T-cell (primary cell): ENCODE measurements at regions of chr4 and their contacts with region 1.

Region 1: DNA sequence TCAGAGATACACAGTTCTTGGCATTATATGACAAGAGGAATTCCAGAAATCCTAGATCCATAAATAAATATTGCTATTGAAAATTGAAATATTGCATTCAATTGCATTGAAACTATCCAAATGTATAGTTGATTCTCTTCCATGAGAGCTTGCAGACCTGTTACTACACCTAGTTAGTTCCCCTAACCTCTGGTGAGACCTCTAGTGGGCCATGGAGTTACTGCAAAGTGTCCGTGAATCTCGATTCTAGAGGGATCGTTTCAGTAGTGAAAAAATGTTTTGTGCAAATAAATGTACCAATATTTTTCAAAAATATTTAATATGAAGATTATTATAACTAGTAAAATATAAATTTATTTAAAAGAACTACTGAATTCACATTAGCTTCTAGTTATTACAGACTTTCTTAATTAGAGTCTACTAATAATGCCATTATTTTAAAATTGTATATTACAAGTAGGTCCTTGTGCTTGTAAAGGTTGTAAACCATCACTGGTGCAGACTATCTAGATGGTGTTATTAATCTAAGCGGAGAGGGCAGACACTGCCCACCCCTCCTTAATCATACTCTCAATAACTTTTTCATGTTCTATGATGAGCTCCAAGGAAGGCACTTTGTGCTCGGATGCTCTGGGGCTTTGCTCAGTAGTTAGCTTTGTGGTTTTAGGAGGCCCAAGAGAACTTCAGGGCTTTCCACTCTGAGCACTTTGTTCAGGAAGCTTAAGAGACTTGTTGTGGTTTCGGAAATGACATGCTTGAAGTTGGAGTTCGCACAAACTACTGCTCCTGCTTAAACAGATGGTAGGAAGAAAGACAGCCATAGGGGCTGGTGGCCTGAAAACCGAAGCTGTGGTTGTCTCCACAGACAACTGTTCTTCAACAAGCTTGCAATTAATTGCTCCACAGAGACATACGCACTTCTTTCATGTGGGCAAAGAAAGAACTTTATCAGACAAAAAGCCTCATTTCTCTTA is 42.8 kb downstream of the IL21 start:
- DNase-seq: peak; percentile 22 to 88 (median 67)
- ATAC-seq: peak; percentile 83 to 89 (median 84)
- H3K4me3 ChIP-seq: peak overlapping the region; percentile 18 to 23
- H3K4me3 Mint-ChIP-seq: peak overlapping the region; percentile 20 to 67 (median 62)
- H3K27ac ChIP-seq: peak overlapping the region; percentile 42
- H3K27ac Mint-ChIP-seq: peak overlapping the region; percentile 88 to 93
- H3K4me1 ChIP-seq: peaks cover 22 to 43% of the 10 kb centered on the region in 2 experiments
- H3K4me1 Mint-ChIP-seq: peaks cover 30 to 45% (median 41%) of the 10 kb centered on the region in 3 donors
- H3K27me3 ChIP-seq: peaks cover 0 to 3% of the 10 kb centered on the region in 2 experiments
- H3K27me3 Mint-ChIP-seq: no peaks in the 10 kb centered on the region

Region 2: GRCh38 chr4:122309988-122310626 is 268.0 kb before region 1 on chr4:
- CTCF ChIA-PET with region 1: interaction called, 8 to 18 read pairs
- POLR2A ChIA-PET with region 1: interaction called in 1 of 2 experiments, 3 read pairs
- DNase-seq: peak in 1 of 35 experiments; percentile 11
- ATAC-seq: no peak
- H3K4me3 ChIP-seq: no peak overlapping the region
- H3K4me3 Mint-ChIP-seq: no peak overlapping the region
- H3K27ac ChIP-seq: no peak overlapping the region
- H3K27ac Mint-ChIP-seq: no peak overlapping the region
- H3K4me1 ChIP-seq: no peaks in the 10 kb centered on the region
- H3K4me1 Mint-ChIP-seq: peaks cover 0 to 2% (median 0%) of the 10 kb centered on the region in 3 donors
- H3K27me3 ChIP-seq: no peaks in the 10 kb centered on the region
- H3K27me3 Mint-ChIP-seq: no peaks in the 10 kb centered on the region

Region 3: GRCh38 chr4:122458625-122459024 is 119.5 kb before region 1 on chr4:
- CTCF ChIA-PET with region 1: interaction called in 1 of 2 experiments, 16 read pairs
- POLR2A ChIA-PET with region 1: interaction called in 1 of 2 experiments, 3 read pairs
- DNase-seq: peak in 22 of 35 experiments; percentile 0 to 67 (median 14)
- ATAC-seq: peak; percentile 67 to 77 (median 69)
- H3K4me3 ChIP-seq: peak overlapping the region; percentile 29
- H3K4me3 Mint-ChIP-seq: peak overlapping the region; percentile 76 to 81 (median 77)
- H3K27ac ChIP-seq: peak overlapping the region; percentile 56
- H3K27ac Mint-ChIP-seq: peak overlapping the region; percentile 91
- H3K4me1 ChIP-seq: peaks cover 3 to 28% of the 10 kb centered on the region in 2 experiments
- H3K4me1 Mint-ChIP-seq: peaks cover 44 to 50% (median 49%) of the 10 kb centered on the region in 3 donors
- H3K27me3 ChIP-seq: no peaks in the 10 kb centered on the region
- H3K27me3 Mint-ChIP-seq: peaks cover 0 to 3% of the 10 kb centered on the region in 2 donors

Region 4: DNA sequence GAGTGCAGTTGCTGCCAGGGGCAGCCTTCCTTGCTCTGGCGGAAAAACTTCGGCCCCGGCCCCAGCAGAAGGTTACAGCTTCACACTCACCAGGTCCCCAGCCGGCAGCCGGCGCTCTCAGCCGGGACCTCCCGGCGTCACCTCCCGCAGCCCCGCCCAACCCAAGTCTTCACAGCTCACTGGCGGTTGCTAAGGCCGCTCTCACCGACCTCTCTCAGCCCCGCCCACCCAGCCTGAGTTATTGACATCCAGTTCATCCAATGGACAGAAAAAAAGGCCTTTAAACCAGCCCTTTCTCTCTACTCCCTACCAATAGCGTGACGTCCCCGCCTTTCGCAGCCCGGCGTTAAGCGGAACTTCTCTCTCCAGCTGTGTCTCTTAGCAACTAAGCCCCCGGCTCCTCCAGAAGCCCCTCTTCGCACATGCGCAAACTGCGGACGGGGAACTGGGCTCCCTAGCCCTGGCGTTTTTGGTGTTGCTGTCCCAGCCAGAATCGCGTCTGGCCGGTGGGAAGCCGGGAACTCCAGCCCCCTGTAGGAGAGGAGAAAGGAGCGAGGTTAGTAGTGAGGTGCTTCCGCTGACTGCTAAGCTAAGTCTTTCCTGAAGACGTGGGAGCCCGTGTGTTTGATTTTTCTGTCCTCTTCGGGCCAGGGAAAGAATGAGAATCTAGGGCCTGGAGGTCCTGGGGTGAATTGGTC is 154.4 kb after region 1 on chr4 and contains the start of gene BBS12:
- CTCF ChIA-PET with region 1: interaction called in 1 of 2 experiments, 19 read pairs
- POLR2A ChIA-PET with region 1: interaction called, 5 to 8 read pairs
- DNase-seq: peak; percentile 95 to 100 (median 98)
- ATAC-seq: peak; percentile 97 to 99 (median 99)
- H3K4me3 ChIP-seq: peak within 1 kb of the TSS; percentile 87 to 96
- H3K4me3 Mint-ChIP-seq: peak within 1 kb of the TSS; percentile 96 to 98 (median 98)
- H3K27ac ChIP-seq: peak within 1 kb of the TSS; percentile 86
- H3K27ac Mint-ChIP-seq: peak within 1 kb of the TSS; percentile 95 to 96
- H3K4me1 ChIP-seq: peaks cover 7 to 12% of the 10 kb centered on the region in 2 experiments
- H3K4me1 Mint-ChIP-seq: peaks cover 23 to 27% (median 24%) of the 10 kb centered on the region in 3 donors
- H3K27me3 ChIP-seq: no peaks in the 10 kb centered on the region
- H3K27me3 Mint-ChIP-seq: no peaks in the 10 kb centered on the region
- total RNA-seq, gene BBS12: 0.43 to 4.6 (median 3.2) TPM